ENCODE measurements at regions of chr1 and their contacts with region 1.

Region 1: DNA sequence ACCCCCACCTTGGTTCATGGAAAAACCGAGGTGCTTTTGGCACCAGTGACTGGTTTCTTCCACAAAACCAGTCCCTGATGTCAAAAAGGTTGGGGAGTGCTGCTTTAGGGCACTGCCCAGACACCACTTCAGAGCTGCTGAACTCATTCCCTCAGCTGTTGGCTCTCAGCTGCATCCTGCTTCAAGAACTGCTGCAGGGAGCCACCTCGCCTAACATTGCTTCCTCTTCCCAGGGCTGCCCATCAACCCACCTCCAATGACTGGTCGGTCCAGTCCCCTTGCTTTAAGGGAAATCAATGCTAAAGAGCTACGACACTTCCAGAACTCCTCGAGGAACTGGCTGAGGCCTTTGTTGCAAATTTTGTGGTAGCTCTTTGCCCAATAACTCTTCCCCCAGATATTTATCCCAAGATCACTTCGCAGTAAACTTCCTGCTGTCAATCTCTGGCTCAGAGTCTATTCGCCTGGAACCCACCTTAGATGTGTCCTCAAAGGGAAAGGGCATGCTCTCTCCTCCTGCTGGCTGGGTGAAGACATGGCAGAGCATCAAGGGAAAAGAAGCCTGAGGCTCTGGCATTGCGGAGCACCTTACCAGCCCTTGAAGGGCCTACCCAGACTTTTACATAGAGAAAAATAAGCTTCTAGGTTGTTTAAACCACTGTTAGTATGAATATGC is 29.0 kb downstream of the C1orf52 start:
- DNase-seq: no peak
- H3K4me3 ChIP-seq: no peak overlapping the region
- H3K27ac ChIP-seq: no peak overlapping the region
- H3K4me1 ChIP-seq: peaks cover 4 to 13% (median 5%) of the 10 kb centered on the region in 3 donors
- H3K27me3 ChIP-seq: no peaks in the 10 kb centered on the region
- CTCF ChIP-seq: peak in 1 of 6 experiments; percentile 30
- POLR2A ChIP-seq: no peak

Region 2: DNA sequence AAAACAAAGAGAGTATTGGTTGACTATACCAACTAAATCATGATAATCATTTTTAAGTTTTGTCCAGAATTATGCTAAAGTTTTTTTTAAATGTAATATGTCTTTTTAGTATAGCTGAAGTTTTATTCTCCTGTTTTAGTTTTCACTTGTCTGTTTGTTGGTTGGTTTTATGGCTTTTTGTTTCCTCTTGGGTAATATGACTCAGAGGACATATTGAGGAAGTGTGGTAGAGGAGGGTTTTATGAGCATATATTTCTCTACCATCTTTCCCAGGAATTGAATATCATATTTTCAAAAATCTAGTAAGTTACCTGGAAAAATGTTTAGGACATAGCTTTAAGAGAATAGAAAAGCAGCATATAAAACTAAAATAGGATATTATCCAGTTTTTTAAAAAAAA is 113.6 kb before region 1 on chr1:
- intact Hi-C with region 1: loop called (anchors 10 kb)
- DNase-seq: no peak
- H3K4me3 ChIP-seq: no peak overlapping the region
- H3K27ac ChIP-seq: no peak overlapping the region
- H3K4me1 ChIP-seq: no peaks in the 10 kb centered on the region
- H3K27me3 ChIP-seq: no peaks in the 10 kb centered on the region
- CTCF ChIP-seq: no peak
- POLR2A ChIP-seq: no peak